ENCODE measurements at regions of chr17 and their contacts with region 1.

Region 1: GRCh38 chr17:17356149-17356930 is 53.2 kb downstream of the NT5M start:
- DNase-seq: peak; percentile 73 to 96 (median 88)
- H3K4me3 ChIP-seq: no peak overlapping the region
- H3K27ac ChIP-seq: no peak overlapping the region
- H3K4me1 ChIP-seq: no peaks in the 10 kb centered on the region
- H3K27me3 ChIP-seq: no peaks in the 10 kb centered on the region
- CTCF ChIP-seq: peak; percentile 99 to 100 (median 100)
- POLR2A ChIP-seq: peak in 1 of 2 donors; percentile 17

Region 2: DNA sequence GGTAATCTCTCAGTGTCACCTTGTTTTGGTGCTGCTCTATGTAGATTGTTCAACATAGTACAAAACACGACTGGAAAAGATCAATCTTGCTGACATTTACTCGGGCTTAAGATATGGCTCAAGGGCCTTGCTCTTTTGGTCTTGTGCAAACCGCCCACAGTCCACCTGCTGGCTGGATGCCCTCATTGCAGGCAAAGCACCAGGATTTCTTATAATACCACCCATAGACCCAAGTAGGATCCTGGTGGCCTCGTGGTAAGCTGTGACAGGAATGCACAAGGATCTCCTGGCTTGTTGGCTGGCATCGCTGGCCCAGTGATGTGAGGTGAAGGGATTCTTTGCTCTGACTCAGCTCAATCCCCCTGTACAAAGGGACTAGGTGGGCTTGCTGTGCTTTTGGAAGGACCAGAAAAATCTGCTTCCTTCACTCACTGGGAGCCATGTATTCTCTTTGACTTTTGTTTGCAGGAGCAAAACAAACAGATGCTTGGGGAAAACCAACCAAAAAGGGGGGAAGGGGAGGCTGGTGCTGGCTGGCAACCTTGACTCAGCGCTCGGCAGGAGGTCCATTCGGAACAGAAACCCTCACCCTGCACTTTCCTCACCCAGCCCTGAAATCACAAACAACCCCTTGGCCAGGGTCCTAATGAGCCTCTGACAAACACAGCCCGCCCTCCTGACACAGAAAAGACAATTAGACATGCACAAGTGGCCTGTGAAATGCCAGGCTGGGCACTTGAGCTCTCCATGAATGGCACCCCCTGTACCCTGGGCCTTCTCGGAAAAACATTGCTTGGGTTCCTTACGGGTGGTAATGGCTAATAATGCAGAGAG is 83.9 kb after region 1 on chr17:
- intact Hi-C with region 1: loop called in 1 of 2 experiments (anchors 10 kb)
- DNase-seq: peak; percentile 43 to 81 (median 69)
- H3K4me3 ChIP-seq: no peak overlapping the region
- H3K27ac ChIP-seq: no peak overlapping the region
- H3K4me1 ChIP-seq: peaks cover 0 to 6% of the 10 kb centered on the region in 2 donors
- H3K27me3 ChIP-seq: no peaks in the 10 kb centered on the region
- CTCF ChIP-seq: peak; percentile 17 to 68 (median 53)
- POLR2A ChIP-seq: no peak

Region 3: GRCh38 chr17:17496189-17497064 is 140.1 kb after region 1 on chr17 and contains the start of gene RASD1:
- intact Hi-C with region 1: loop called (anchors 2 to 5 kb)
- DNase-seq: peak; percentile 90 to 96 (median 93)
- H3K4me3 ChIP-seq: peak within 1 kb of the TSS in 2 of 4 donors; percentile 29 to 58
- H3K27ac ChIP-seq: peak within 1 kb of the TSS; percentile 33 to 91 (median 78)
- H3K4me1 ChIP-seq: peaks cover 9 to 31% of the 10 kb centered on the region in 2 donors
- H3K27me3 ChIP-seq: no peaks in the 10 kb centered on the region
- CTCF ChIP-seq: peak; percentile 51 to 99 (median 80)
- POLR2A ChIP-seq: peak; percentile 99
- total RNA-seq, gene RASD1: 4.5 to 134 (median 22.3) TPM

Region 4: GRCh38 chr17:17568749-17569195 is 212.4 kb after region 1 on chr17:
- intact Hi-C with region 1: loop called (anchors 2 to 10 kb)
- DNase-seq: peak; percentile 54 to 85 (median 76)
- H3K4me3 ChIP-seq: no peak overlapping the region
- H3K27ac ChIP-seq: no peak overlapping the region
- H3K4me1 ChIP-seq: peaks cover 11 to 34% of the 10 kb centered on the region in 2 donors
- H3K27me3 ChIP-seq: no peaks in the 10 kb centered on the region
- CTCF ChIP-seq: peak; percentile 42 to 73 (median 59)
- POLR2A ChIP-seq: no peak

Region 5: DNA sequence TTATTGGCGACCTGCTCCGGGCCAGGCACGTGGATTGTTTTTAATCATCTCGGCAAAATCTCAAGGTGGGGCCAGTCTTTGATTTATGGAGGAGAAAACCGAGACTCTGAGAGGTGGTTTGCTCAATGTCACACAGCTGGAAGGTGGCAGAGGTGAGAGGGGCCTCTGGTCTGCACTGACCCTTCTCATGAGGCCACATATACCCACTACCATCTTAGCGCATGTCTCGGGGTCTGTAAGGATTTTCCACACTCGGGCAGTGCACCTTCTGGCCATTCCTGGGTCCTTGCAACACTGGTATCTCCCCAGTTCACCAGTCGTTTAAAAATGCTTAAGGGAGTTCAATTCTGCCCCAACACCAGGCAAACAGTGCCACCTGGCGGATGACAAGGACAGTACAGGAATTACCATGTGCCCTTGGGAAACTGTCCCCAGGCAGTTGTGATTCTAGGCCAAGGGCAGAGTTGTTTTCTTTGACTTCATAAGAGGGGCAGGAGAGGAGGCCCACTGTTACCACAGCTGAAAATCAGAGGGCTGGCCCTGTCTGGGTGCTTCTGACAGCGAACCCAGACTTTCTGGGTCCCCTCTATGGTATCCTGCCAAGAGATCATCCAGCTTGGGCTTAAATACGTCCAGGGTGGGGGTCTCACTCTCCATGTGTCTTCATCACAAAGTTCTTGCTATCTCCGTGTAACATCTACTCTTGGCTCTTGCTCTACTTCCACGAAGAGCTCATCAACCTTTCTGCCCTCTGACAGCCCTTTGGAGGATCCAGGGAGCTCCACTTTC is 285.5 kb after region 1 on chr17:
- intact Hi-C with region 1: loop called (anchors 2 to 5 kb)
- DNase-seq: peak; percentile 70 to 90 (median 76)
- H3K4me3 ChIP-seq: no peak overlapping the region
- H3K27ac ChIP-seq: no peak overlapping the region
- H3K4me1 ChIP-seq: no peaks in the 10 kb centered on the region
- H3K27me3 ChIP-seq: no peaks in the 10 kb centered on the region
- CTCF ChIP-seq: peak; percentile 90 to 97 (median 94)
- POLR2A ChIP-seq: no peak